ENCODE measurements at regions of chr2 and their contacts with region 1.

Region 1: GRCh38 chr2:46050489-46050888 is 246.7 kb upstream of the EPAS1 start:
- DNase-seq: no peak
- ATAC-seq: no peak
- H3K4me3 ChIP-seq: no peak overlapping the region
- H3K4me3 Mint-ChIP-seq: no peak overlapping the region
- H3K27ac ChIP-seq: no peak overlapping the region
- H3K27ac Mint-ChIP-seq: no peak overlapping the region
- H3K4me1 ChIP-seq: no peaks in the 10 kb centered on the region
- H3K4me1 Mint-ChIP-seq: no peaks in the 10 kb centered on the region
- H3K27me3 ChIP-seq: no peaks in the 10 kb centered on the region
- H3K27me3 Mint-ChIP-seq: no peaks in the 10 kb centered on the region
- CTCF ChIP-seq: no peak

Region 2: GRCh38 chr2:46062637-46063412 is 12.3 kb after region 1 on chr2:
- CTCF ChIA-PET with region 1: interaction called, 21 read pairs
- POLR2A ChIA-PET with region 1: no interaction called
- intact Hi-C with region 1: no loop called
- DNase-seq: peak; percentile 51 to 74 (median 70)
- ATAC-seq: peak; percentile 76
- H3K4me3 ChIP-seq: no peak overlapping the region
- H3K4me3 Mint-ChIP-seq: no peak overlapping the region
- H3K27ac ChIP-seq: no peak overlapping the region
- H3K27ac Mint-ChIP-seq: no peak overlapping the region
- H3K4me1 ChIP-seq: no peaks in the 10 kb centered on the region
- H3K4me1 Mint-ChIP-seq: peaks cover 3% of the 10 kb centered on the region
- H3K27me3 ChIP-seq: no peaks in the 10 kb centered on the region
- H3K27me3 Mint-ChIP-seq: peaks cover 3% of the 10 kb centered on the region
- CTCF ChIP-seq: peak; percentile 79